Adrenal gland (tissue), 19 donors: ENCODE measurements at regions of chr3 and their contacts with region 1.

Region 1: DNA sequence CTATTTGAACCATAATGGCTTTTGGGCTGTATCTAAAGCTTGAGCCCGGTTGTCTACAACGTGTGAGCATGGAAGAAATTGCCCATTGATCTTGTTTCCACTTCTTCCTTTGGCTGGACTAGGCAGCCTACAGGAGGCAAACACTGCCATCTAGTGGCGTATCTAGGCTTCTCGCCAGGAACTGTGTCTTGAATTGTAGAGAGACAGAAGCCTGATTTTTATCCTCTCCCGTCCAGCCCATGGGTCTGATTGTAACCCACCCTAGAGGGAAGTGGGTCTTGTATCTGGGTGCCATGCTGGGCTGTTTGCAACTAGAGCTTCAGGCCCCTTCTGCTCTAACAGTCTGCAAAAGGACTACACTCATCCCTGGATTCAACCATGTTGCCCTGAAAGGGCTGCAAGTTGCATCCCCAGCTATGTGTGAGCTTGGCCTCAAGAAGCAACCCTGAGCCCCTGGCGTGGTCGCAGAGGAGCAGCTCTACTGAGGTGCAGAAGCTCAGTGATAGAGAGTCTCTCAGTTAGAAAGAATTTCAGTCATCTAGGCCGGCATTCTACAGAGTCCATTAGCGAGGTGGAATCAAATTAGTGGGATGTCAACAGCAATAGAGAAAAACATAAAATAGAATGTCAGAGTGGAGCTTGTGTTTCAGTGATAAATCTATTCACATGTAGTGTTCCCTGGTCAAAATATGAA is 170.2 kb upstream of the UMPS start:
- DNase-seq: peak; percentile 70 to 93 (median 83)
- H3K4me3 ChIP-seq: no peak overlapping the region
- H3K27ac ChIP-seq: peak overlapping the region in 3 of 5 donors; percentile 49 to 82 (median 70)
- H3K4me1 ChIP-seq: peaks cover 22 to 23% of the 10 kb centered on the region in 2 donors
- H3K27me3 ChIP-seq: no peaks in the 10 kb centered on the region
- CTCF ChIP-seq: peak; percentile 75 to 89 (median 80)
- POLR2A ChIP-seq: no peak

Region 2: GRCh38 chr3:124351430-124352148 is 208.4 kb before region 1 on chr3:
- intact Hi-C with region 1: loop called in 1 of 2 experiments (anchors 5 kb)
- DNase-seq: peak; percentile 38 to 63 (median 50)
- H3K4me3 ChIP-seq: no peak overlapping the region
- H3K27ac ChIP-seq: no peak overlapping the region
- H3K4me1 ChIP-seq: no peaks in the 10 kb centered on the region
- H3K27me3 ChIP-seq: no peaks in the 10 kb centered on the region
- CTCF ChIP-seq: peak; percentile 53 to 79 (median 68)
- POLR2A ChIP-seq: no peak

Region 3: DNA sequence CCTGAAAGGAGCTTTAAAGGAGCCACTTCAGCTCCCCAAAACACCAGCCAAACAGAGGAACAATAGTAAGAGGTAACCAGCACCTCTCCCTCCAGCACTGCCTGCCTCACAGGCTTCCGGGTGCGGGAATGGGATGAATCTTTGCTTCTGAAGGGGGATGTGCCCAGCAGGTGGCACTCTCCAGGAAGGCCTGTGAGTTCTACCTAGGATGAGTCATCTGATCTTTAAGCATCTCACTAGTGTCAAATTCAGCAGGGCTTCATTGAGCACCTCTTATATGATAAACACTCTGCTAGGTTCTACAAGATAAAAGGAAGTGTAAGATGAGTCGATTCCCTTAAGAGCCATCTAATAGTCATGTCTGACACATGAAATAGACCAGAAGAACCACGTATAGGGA is 67.2 kb before region 1 on chr3:
- intact Hi-C with region 1: loop called in 1 of 2 experiments (anchors 10 kb)
- DNase-seq: peak; percentile 55 to 81 (median 68)
- H3K4me3 ChIP-seq: no peak overlapping the region
- H3K27ac ChIP-seq: no peak overlapping the region
- H3K4me1 ChIP-seq: peaks cover 0 to 8% of the 10 kb centered on the region in 2 donors
- H3K27me3 ChIP-seq: no peaks in the 10 kb centered on the region
- CTCF ChIP-seq: peak; percentile 34 to 64 (median 54)
- POLR2A ChIP-seq: no peak

Region 4: DNA sequence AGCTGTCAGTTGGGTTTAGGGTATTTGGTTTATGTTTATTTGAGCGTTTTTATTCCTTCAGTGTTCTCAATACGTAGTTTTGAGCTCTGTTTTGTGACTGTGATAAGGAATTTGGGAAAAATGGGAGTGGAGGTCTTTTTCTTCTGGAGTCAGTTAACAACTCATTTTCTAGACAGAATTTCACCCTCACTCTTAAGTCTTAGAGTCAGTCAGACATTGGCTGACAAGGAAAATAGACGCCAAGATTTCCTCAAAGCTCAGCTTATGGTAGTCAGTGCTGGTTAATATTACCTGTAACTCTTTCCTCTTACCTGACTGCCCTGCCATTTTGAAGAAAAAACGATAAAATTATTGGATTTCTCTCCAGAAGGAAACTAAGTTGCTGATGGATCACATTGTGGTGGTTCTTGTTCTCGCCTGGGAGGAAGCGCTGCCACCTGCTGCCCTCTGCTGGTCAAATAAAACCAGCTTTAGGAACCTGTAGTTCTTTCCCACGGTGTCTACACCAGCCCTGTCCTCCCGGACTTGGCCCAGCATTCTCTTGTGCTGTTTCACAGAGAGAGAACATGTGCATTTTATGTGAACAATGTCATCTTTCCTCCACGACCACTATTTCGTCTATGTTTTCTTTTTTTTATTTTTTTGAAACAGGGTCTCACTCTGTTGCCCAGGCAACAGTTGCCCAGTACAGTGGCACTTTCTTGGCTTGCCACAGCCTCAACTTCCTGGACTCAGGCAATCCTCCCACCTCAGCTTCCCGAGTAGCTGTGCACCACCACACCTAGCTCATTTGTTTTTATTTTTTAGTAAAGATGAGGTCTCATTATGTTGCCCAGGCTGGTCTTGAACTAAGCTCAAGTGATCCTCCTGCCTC is 128.8 kb after region 1 on chr3:
- intact Hi-C with region 1: loop called (anchors 5 kb)
- DNase-seq: peak; percentile 80 to 94 (median 84)
- H3K4me3 ChIP-seq: no peak overlapping the region
- H3K27ac ChIP-seq: no peak overlapping the region
- H3K4me1 ChIP-seq: peaks cover 0 to 5% of the 10 kb centered on the region in 2 donors
- H3K27me3 ChIP-seq: no peaks in the 10 kb centered on the region
- CTCF ChIP-seq: peak; percentile 70 to 93 (median 85)
- POLR2A ChIP-seq: no peak